HepG2 (cell line): ENCODE measurements at regions of chr6 and their contacts with region 1.

Region 1: DNA sequence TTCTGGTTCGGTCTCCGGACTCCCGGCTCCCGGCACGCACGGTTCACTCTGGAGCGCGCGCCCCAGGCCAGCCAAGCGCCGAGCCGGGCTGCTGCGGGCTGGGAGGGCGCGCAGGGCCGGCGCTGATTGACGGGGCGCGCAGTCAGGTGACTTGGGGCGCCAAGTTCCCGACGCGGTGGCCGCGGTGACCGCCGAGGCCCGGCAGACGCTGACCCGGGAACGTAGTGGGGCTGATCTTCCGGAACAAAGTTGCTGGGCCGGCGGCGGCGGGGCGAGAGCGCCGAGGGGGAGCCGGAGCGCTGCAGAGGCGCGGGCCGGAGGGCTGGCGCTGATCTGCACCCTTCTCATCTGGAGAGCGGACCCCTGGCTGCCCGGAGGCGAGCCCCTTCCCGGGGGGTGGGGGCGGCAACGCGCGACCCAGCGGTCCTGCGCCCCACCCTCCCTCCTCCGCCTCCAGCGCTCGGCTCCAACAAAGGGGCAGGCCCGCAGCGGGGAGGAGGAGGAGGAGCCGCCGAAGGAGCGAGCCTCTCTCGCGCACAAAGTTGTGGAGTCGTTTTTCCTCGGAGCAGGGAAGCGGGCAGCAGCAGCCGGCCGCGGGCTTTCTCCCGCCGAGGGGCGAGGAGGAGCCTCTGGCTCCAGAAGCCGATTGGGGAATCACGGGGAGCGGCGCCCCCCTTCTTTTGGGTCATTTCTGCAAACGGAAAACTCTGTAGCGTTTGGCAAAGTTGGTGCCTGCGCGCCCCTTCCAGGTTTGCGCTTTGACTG is at the start of gene UTRN:
- DNase-seq: peak; percentile 74
- ATAC-seq: peak; percentile 78
- H3K4me3 ChIP-seq: peak within 1 kb of the TSS; percentile 87 to 99 (median 89)
- H3K27ac ChIP-seq: peak within 1 kb of the TSS; percentile 88
- H3K4me1 ChIP-seq: peaks cover 38% of the 10 kb centered on the region
- H3K27me3 ChIP-seq: peaks cover 0 to 3% of the 10 kb centered on the region in 2 experiments; a peak in 1 of 5 replicates
- CTCF ChIP-seq: peak; percentile 27; the same call in 1 of the 2 replicates
- EP300 ChIP-seq: no peak
- POLR2A ChIP-seq: peak; percentile 74 to 75
- RAD21 ChIP-seq: peak; percentile 53; the same call in 1 of the 2 replicates
- total RNA-seq, gene UTRN: 85.4 and 102 TPM in 2 replicates

Region 2: DNA sequence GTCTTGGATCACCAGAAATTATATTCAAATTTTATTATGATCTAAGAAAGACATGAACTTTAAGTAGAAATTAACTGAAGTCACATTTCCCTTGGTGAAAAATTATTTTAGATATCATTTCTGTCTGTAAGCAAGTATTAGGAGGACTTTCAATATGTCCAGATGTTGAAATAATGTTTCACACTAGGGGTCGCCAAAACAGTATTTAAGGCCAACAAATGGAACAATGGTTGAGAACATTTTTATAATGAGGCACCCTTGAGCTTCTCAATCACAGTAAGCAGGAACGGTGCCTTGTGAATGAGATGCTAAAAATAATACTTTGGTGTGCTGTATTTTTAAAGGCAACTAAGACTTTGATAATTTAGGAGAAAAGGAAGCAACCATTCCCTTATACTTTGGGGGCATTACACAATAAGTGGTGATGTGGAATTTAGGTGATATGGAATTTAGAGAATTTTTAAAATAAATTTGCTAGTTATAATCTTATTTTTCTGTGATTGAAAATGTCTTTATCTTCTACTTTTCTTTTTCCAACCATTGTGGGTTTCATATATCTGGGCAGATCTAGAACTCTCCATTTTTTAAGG is 180.0 kb before region 1 on chr6:
- CTCF ChIA-PET with region 1: no interaction called
- POLR2A ChIA-PET with region 1: no interaction called
- in situ Hi-C with region 1: no loop called
- intact Hi-C with region 1: loop called (anchors 1 kb)
- DNase-seq: peak; percentile 74
- ATAC-seq: peak; percentile 86
- H3K4me3 ChIP-seq: no peak overlapping the region
- H3K27ac ChIP-seq: no peak overlapping the region
- H3K4me1 ChIP-seq: no peaks in the 10 kb centered on the region
- H3K27me3 ChIP-seq: no peaks in the 10 kb centered on the region
- CTCF ChIP-seq: peak; percentile 84
- EP300 ChIP-seq: no peak
- POLR2A ChIP-seq: no peak
- RAD21 ChIP-seq: peak; percentile 71

Region 3: GRCh38 chr6:144190593-144190992 is 94.4 kb before region 1 on chr6:
- CTCF ChIA-PET with region 1: no interaction called
- POLR2A ChIA-PET with region 1: no interaction called
- in situ Hi-C with region 1: no loop called
- intact Hi-C with region 1: no loop called
- DNase-seq: no peak
- ATAC-seq: no peak
- H3K4me3 ChIP-seq: no peak overlapping the region
- H3K27ac ChIP-seq: no peak overlapping the region
- H3K4me1 ChIP-seq: no peaks in the 10 kb centered on the region
- H3K27me3 ChIP-seq: no peaks in the 10 kb centered on the region
- CTCF ChIP-seq: no peak
- EP300 ChIP-seq: no peak
- POLR2A ChIP-seq: no peak
- RAD21 ChIP-seq: no peak

Region 4: GRCh38 chr6:144265390-144265789 is 19.6 kb before region 1 on chr6:
- CTCF ChIA-PET with region 1: no interaction called
- POLR2A ChIA-PET with region 1: interaction called, 21 read pairs
- in situ Hi-C with region 1: no loop called
- intact Hi-C with region 1: loop called (anchors 2 kb)
- DNase-seq: peak; percentile 67
- ATAC-seq: peak; percentile 58
- H3K4me3 ChIP-seq: peak overlapping the region; percentile 11 to 51 (median 51); a peak in 4 of 6 replicates
- H3K27ac ChIP-seq: no peak overlapping the region
- H3K4me1 ChIP-seq: peaks cover 49% of the 10 kb centered on the region
- H3K27me3 ChIP-seq: no peaks in the 10 kb centered on the region
- CTCF ChIP-seq: no peak
- EP300 ChIP-seq: no peak
- POLR2A ChIP-seq: no peak
- RAD21 ChIP-seq: no peak

Region 5: DNA sequence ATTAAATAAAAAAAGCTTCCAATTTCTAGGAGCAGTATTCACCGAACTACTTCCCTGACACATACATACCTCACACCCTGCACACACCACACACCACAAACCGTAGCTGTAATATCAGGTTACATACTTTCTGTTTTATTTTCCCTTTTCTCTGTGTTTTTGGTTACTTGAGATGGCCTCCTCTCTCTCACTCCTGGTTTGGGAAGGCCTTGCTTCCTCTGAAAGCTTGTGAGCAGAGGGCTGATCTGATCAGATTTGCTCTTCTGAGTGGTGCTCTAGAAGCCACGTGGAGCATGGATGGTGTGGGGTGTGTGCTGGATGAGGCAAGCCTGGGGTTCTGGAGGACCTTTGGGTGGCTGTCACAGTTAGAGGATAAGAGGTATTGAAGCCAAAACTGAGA is 21.0 kb after region 1 on chr6:
- CTCF ChIA-PET with region 1: no interaction called
- POLR2A ChIA-PET with region 1: interaction called, 3 read pairs
- in situ Hi-C with region 1: no loop called
- intact Hi-C with region 1: loop called (anchors 2 kb)
- DNase-seq: no peak
- ATAC-seq: peak; percentile 12; the same call in 1 of the 3 replicates
- H3K4me3 ChIP-seq: no peak overlapping the region
- H3K27ac ChIP-seq: no peak overlapping the region
- H3K4me1 ChIP-seq: peaks cover 94% of the 10 kb centered on the region
- H3K27me3 ChIP-seq: no peaks in the 10 kb centered on the region
- CTCF ChIP-seq: no peak
- EP300 ChIP-seq: no peak
- POLR2A ChIP-seq: no peak
- RAD21 ChIP-seq: no peak

Region 6: DNA sequence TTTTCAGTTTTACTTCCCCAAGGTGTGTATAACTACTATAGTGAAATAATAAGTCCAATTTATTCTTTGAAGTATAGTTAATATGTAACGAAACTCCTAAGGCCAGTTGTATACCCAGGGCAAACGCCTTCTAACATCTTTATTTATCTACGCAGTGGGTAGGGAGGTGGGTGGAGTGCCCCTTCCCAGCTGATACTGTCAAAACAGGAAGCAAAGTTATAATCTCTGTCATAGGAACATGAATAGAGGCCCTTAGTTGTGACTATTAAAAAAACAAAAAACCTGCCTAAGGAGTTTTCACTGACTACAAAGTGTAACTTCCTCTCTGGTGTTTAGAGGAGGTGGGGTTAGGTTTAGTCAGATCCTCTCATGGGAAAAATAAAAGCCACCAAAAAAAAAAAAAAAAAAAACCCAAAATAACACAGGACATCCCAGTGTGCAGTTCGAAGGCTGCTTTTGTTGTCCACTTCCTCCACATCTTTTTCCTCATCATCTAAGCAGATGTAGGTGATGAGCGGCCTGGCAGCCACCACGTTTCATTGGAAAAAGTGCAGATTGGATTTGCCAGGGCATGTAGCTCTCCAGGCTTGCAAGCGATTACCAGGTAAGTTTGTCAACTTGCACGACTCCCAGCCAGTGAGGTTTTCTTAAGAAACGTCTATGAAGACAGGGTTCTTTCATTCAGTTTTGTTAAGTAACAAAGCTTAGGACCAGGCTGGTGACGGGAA is 58.9 kb after region 1 on chr6:
- CTCF ChIA-PET with region 1: no interaction called
- POLR2A ChIA-PET with region 1: interaction called, 6 read pairs
- in situ Hi-C with region 1: no loop called
- intact Hi-C with region 1: loop called (anchors 2 kb)
- DNase-seq: peak; percentile 98
- ATAC-seq: peak; percentile 95
- H3K4me3 ChIP-seq: peak overlapping the region in 2 of 3 experiments; percentile 36 to 47; a peak in 4 of 6 replicates
- H3K27ac ChIP-seq: peak overlapping the region; percentile 56
- H3K4me1 ChIP-seq: peaks cover 99% of the 10 kb centered on the region
- H3K27me3 ChIP-seq: no peaks in the 10 kb centered on the region
- CTCF ChIP-seq: no peak
- EP300 ChIP-seq: peak in 1 of 2 experiments; percentile 99; a peak in 2 of 4 replicates
- POLR2A ChIP-seq: no peak; a peak in 1 of 4 replicates
- RAD21 ChIP-seq: no peak

Region 7: DNA sequence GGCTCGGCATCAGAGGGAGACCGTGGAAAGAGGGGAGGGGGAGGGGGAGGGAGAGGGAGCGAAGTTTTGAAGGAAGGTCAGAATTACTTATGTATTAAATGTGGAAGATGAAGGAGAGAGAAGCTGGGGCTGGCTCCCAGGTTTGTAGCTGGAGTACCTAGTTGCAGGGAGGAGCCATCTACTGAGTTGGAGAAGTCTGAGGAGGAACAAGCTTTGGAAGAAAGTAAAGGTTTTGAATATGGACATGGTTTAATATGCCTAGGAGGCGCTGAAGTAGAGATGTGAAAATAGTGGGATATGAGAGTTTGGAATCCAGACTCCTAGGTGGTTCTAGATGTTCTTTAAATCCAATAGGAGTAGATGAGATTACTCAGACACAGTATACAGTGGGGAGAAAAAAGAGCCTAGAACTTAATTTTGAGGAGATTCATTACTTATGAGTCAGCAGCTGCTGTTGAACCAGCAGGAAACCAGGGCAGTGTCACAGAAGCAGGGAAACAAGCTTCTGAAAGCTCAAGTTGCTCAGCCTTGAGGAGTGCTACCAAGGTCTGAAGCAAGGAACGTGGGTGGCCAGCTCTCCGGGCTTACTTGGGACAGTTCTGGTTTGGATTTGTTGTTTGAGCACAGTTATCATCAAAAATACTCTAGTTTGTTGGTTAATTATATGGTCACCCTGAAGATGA is 149.5 kb after region 1 on chr6:
- CTCF ChIA-PET with region 1: no interaction called
- POLR2A ChIA-PET with region 1: no interaction called
- in situ Hi-C with region 1: no loop called
- intact Hi-C with region 1: loop called (anchors 5 kb)
- DNase-seq: no peak
- ATAC-seq: no peak
- H3K4me3 ChIP-seq: no peak overlapping the region
- H3K27ac ChIP-seq: no peak overlapping the region
- H3K4me1 ChIP-seq: peaks cover 15% of the 10 kb centered on the region
- H3K27me3 ChIP-seq: no peaks in the 10 kb centered on the region
- CTCF ChIP-seq: no peak
- EP300 ChIP-seq: no peak
- POLR2A ChIP-seq: no peak
- RAD21 ChIP-seq: no peak

Region 8: GRCh38 chr6:144630857-144631256 is 345.9 kb after region 1 on chr6:
- CTCF ChIA-PET with region 1: no interaction called
- POLR2A ChIA-PET with region 1: no interaction called
- in situ Hi-C with region 1: no loop called
- intact Hi-C with region 1: no loop called
- DNase-seq: no peak
- ATAC-seq: no peak
- H3K4me3 ChIP-seq: no peak overlapping the region
- H3K27ac ChIP-seq: no peak overlapping the region
- H3K4me1 ChIP-seq: peaks cover 18% of the 10 kb centered on the region
- H3K27me3 ChIP-seq: no peaks in the 10 kb centered on the region
- CTCF ChIP-seq: no peak
- EP300 ChIP-seq: no peak
- POLR2A ChIP-seq: no peak
- RAD21 ChIP-seq: no peak